ENCODE measurements at regions of chr7 and their contacts with region 1.

Region 1: GRCh38 chr7:27921081-27921836 is 181.3 kb downstream of the TAX1BP1 start:
- DNase-seq: peak; percentile 48
- H3K4me3 Mint-ChIP-seq: no peak overlapping the region
- H3K27ac Mint-ChIP-seq: no peak overlapping the region
- H3K4me1 Mint-ChIP-seq: peaks cover 4% of the 10 kb centered on the region
- H3K27me3 Mint-ChIP-seq: no peaks in the 10 kb centered on the region

Region 2: DNA sequence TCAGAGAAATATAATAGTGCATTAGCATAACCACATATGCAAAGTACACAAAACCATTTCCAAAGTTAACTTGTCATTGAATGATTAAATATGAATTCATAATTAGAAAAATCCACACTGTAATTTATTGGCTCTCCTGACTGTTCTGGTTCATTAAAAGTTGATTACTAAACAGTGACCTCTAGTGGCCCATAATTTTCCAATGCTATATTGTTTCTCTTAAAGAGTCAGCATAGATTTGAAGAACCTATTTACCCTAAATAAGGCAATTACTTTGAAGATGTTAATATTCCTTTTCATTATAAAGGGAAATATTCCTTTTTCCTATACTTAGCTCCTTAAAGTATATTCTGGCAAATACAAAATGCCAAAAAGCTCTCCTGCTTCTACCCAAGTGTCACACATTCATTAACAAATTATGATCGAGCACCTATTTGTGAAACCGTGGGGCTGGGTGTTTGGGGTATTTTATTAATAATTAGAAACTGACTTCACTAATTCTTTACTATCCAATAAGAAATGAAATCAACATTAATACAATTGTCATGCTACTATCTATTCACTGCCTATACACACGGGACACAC is 344.8 kb before region 1 on chr7:
- CTCF ChIA-PET with region 1: no interaction called
- intact Hi-C with region 1: loop called (anchors 10 kb)
- DNase-seq: no peak
- H3K4me3 Mint-ChIP-seq: no peak overlapping the region
- H3K27ac Mint-ChIP-seq: no peak overlapping the region
- H3K4me1 Mint-ChIP-seq: no peaks in the 10 kb centered on the region
- H3K27me3 Mint-ChIP-seq: no peaks in the 10 kb centered on the region

Region 3: GRCh38 chr7:27745064-27745583 is 176.1 kb before region 1 on chr7:
- CTCF ChIA-PET with region 1: interaction called, 4 read pairs
- intact Hi-C with region 1: loop called (anchors 1 kb)
- DNase-seq: peak; percentile 5
- H3K4me3 Mint-ChIP-seq: no peak overlapping the region
- H3K27ac Mint-ChIP-seq: no peak overlapping the region
- H3K4me1 Mint-ChIP-seq: peaks cover 51% of the 10 kb centered on the region
- H3K27me3 Mint-ChIP-seq: no peaks in the 10 kb centered on the region

Region 4: DNA sequence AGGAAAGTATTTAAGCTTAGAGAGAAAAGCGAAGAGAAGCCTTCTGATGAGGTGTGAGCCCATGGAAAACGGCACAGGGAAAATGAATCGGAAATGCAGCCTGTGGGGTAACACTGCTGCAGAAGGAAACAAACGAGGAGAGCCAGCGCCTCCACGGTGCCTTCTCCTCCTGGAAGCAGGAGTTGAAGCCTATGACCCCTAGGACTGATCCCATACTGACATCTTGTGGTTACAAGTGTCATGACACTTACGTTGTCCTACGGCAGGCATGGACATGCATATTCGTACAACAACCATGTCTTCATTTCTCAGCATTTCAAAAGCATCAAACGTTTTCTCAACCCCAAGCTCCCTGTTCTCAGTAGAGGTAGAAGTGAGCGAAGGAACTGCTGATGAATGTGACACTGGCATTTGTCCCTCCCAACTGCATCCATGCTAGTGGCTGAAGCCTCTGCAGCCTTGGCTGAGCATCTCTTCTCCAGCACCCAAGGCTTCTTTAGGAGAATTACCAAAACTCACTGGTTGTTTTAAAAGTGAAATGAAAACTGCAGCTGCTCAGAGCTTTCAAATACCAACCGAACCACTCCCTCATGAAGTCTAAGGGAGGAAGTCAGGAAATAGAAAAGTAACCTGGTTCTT is 99.2 kb after region 1 on chr7:
- CTCF ChIA-PET with region 1: interaction called, 9 read pairs
- intact Hi-C with region 1: loop called (anchors 2 kb)
- DNase-seq: peak; percentile 60
- H3K4me3 Mint-ChIP-seq: no peak overlapping the region
- H3K27ac Mint-ChIP-seq: no peak overlapping the region
- H3K4me1 Mint-ChIP-seq: no peaks in the 10 kb centered on the region
- H3K27me3 Mint-ChIP-seq: no peaks in the 10 kb centered on the region

Region 5: GRCh38 chr7:28497009-28497408 is 575.8 kb after region 1 on chr7:
- CTCF ChIA-PET with region 1: no interaction called
- intact Hi-C with region 1: no loop called
- DNase-seq: no peak
- H3K4me3 Mint-ChIP-seq: no peak overlapping the region
- H3K27ac Mint-ChIP-seq: no peak overlapping the region
- H3K4me1 Mint-ChIP-seq: no peaks in the 10 kb centered on the region
- H3K27me3 Mint-ChIP-seq: peaks cover 15% of the 10 kb centered on the region

Measured in activated naive CD4-positive, alpha-beta T cell treated with anti-CD3 and anti-CD28 coated beads for 36 hours (primary cell).